ENCODE measurements at regions of chr7 and their contacts with region 1.

Region 1: GRCh38 chr7:44477063-44477830 is 13.2 kb downstream of the NUDCD3 start:
- DNase-seq: peak; percentile 71
- ATAC-seq: peak; percentile 88
- H3K4me3 ChIP-seq: no peak overlapping the region
- H3K27ac ChIP-seq: no peak overlapping the region
- H3K4me1 ChIP-seq: peaks cover 27% of the 10 kb centered on the region
- H3K27me3 ChIP-seq: no peaks in the 10 kb centered on the region
- CTCF ChIP-seq: peak; percentile 94
- EP300 ChIP-seq: no peak
- POLR2A ChIP-seq: no peak
- RAD21 ChIP-seq: peak; percentile 84

Region 2: GRCh38 chr7:44240983-44241510 is 236.2 kb before region 1 on chr7:
- CTCF ChIA-PET with region 1: interaction called, 13 read pairs
- POLR2A ChIA-PET with region 1: no interaction called
- in situ Hi-C with region 1: loop called (anchors 5 kb)
- intact Hi-C with region 1: loop called (anchors 1 kb)
- DNase-seq: peak; percentile 77
- ATAC-seq: peak; percentile 94
- H3K4me3 ChIP-seq: peak overlapping the region; percentile 38 to 69 (median 52); a peak in 5 of 6 replicates
- H3K27ac ChIP-seq: no peak overlapping the region
- H3K4me1 ChIP-seq: no peaks in the 10 kb centered on the region
- H3K27me3 ChIP-seq: peaks cover 23 to 69% of the 10 kb centered on the region in 2 experiments
- CTCF ChIP-seq: peak; percentile 91
- EP300 ChIP-seq: no peak
- POLR2A ChIP-seq: no peak
- RAD21 ChIP-seq: peak; percentile 69; the same call in 1 of the 2 replicates

Region 3: GRCh38 chr7:44375236-44375699 is 102.0 kb before region 1 on chr7:
- CTCF ChIA-PET with region 1: interaction called, 7 read pairs
- POLR2A ChIA-PET with region 1: no interaction called
- in situ Hi-C with region 1: no loop called
- intact Hi-C with region 1: loop called (anchors 5 kb)
- DNase-seq: peak; percentile 49
- ATAC-seq: peak; percentile 84
- H3K4me3 ChIP-seq: peak overlapping the region in 1 of 3 experiments; percentile 10; a peak in 1 of 6 replicates
- H3K27ac ChIP-seq: no peak overlapping the region
- H3K4me1 ChIP-seq: peaks cover 39% of the 10 kb centered on the region
- H3K27me3 ChIP-seq: peaks cover 0 to 6% of the 10 kb centered on the region in 2 experiments; a peak in 1 of 5 replicates
- CTCF ChIP-seq: peak; percentile 87
- EP300 ChIP-seq: no peak
- POLR2A ChIP-seq: no peak
- RAD21 ChIP-seq: peak; percentile 76

Region 4: GRCh38 chr7:44431091-44431608 is 46.1 kb before region 1 on chr7:
- CTCF ChIA-PET with region 1: interaction called, 9 read pairs
- POLR2A ChIA-PET with region 1: no interaction called
- in situ Hi-C with region 1: no loop called
- intact Hi-C with region 1: loop called (anchors 1 kb)
- DNase-seq: peak; percentile 31
- ATAC-seq: peak; percentile 93
- H3K4me3 ChIP-seq: no peak overlapping the region
- H3K27ac ChIP-seq: no peak overlapping the region
- H3K4me1 ChIP-seq: peaks cover 7% of the 10 kb centered on the region; the same call in 1 of the 2 replicates
- H3K27me3 ChIP-seq: no peaks in the 10 kb centered on the region
- CTCF ChIP-seq: peak; percentile 60
- EP300 ChIP-seq: no peak
- POLR2A ChIP-seq: no peak
- RAD21 ChIP-seq: 0 out of 2 replicates have a peak, but pooled peaks have one; percentile 25